Aorta (tissue), 5 donors: ENCODE measurements at regions of chr1 and their contacts with region 1.

Region 1: DNA sequence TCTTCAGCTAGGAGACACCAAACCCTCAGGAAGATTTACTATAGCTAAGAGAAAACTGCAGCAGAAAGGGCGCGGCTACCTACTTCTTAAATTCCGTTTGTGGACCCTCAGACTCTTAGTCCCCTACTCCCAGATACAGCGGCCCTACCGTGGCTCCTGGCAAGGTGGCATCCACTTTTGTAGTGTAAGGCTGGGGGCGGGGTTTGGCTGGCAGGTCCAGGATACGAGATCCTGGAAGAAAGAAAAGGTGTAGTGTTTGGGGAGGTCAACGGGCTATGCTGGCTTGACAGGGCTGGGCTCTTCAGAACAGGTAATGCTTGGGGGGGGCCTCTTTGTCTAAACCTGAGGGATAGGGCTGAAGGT is 280 bp downstream of the CREB3L4 start:
- DNase-seq: peak in 1 of 2 donors; percentile 62
- ATAC-seq: no peak
- H3K4me3 ChIP-seq: peak overlapping the region; percentile 46 to 68
- H3K27ac ChIP-seq: peak overlapping the region in 1 of 2 donors; percentile 61
- H3K4me1 ChIP-seq: no peaks in the 10 kb centered on the region
- H3K27me3 ChIP-seq: no peaks in the 10 kb centered on the region

Region 2: DNA sequence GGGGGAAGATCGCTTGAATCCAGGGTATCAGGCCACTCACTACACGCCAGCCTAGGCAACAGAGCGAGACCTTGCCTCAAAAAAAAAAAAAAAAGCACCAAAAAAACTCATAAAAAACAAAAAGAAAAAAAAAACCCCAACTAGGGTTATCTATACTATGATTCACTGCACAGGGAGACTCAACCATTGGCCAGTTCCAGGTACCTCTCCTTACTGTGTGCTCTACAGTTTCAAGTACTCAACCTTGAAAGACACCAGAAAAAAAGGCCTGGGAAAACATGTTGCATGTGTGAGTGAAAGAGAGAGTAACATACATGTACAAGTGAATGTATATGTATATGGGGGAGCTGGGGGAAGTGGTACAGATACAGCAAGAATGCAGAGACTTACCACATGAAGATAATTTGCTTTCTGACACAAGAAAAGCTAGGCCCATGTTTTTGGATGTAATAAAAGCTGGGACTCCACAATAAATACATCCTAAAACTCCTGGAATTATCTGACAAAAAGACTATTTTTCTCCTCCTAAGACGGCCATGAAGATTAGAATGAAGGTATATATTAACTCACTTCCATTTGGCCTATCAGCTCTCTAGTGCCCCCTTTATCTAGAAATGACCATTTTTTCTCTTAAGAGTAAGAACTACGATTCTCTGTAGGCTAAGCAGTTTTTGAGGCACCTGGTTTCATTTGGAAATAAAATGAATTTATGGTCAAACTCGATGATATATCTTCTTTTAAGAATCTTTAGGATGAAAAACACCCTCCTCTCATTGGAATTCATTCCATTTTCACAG is 140.6 kb before region 1 on chr1:
- intact Hi-C with region 1: loop called in 1 of 2 experiments (anchors 1 kb)
- DNase-seq: no peak
- ATAC-seq: no peak
- H3K4me3 ChIP-seq: no peak overlapping the region
- H3K27ac ChIP-seq: no peak overlapping the region
- H3K4me1 ChIP-seq: peaks cover 0 to 3% of the 10 kb centered on the region in 2 donors
- H3K27me3 ChIP-seq: no peaks in the 10 kb centered on the region

Region 3: DNA sequence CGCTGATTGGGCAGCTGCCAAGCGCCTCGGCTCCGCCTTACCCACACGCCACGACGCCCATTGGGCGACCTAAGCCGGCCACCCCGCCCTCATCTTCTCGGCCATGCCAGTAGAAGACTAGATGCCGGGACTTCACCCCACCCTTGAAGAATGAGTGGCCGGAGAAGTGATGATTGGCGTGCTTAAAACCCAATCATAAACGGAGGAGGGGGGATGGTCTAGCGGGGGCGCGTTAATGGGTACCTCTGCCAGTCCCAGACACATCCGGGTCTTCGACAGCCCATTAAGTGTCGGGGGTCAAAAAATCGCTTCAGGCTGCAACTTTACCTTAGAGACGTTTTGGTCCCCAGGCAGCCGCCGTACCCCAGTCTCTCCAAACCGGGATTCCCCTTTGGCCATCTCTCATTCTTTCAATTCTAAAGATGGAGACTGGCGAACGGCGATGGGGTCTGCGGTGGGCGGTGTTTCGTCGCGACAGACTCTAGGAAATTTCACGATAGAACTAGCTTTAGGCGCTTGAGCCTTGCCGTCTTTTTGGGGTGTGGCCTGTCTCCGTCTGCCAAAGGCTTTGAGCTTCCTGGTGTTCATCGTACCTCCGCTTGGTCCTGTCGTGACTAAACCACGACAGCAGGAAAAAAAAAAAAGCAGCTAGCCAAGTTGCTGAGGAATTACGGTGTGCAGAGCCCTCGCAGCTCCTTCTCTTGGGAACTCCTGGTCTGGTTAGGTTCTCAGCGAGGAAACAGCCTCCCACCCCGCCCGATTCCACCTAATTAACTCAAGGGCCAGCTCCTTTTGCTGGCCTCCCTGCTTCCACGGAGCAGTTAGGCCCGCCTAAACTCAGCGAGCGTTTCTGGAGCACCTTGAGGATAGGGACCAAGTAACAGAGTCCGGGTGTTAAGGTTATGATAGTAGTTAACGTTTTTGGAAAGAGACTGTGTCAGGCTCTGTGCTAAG is 44.7 kb before region 1 on chr1 and contains the start of gene GATAD2B:
- intact Hi-C with region 1: no loop called
- DNase-seq: peak; percentile 100
- ATAC-seq: peak; percentile 98
- H3K4me3 ChIP-seq: peak within 1 kb of the TSS; percentile 82 to 91
- H3K27ac ChIP-seq: peak within 1 kb of the TSS; percentile 72 to 77
- H3K4me1 ChIP-seq: peaks cover 0 to 4% of the 10 kb centered on the region in 2 donors
- H3K27me3 ChIP-seq: no peaks in the 10 kb centered on the region
- total RNA-seq, gene GATAD2B: 52.3 to 67.8 TPM

Region 4: DNA sequence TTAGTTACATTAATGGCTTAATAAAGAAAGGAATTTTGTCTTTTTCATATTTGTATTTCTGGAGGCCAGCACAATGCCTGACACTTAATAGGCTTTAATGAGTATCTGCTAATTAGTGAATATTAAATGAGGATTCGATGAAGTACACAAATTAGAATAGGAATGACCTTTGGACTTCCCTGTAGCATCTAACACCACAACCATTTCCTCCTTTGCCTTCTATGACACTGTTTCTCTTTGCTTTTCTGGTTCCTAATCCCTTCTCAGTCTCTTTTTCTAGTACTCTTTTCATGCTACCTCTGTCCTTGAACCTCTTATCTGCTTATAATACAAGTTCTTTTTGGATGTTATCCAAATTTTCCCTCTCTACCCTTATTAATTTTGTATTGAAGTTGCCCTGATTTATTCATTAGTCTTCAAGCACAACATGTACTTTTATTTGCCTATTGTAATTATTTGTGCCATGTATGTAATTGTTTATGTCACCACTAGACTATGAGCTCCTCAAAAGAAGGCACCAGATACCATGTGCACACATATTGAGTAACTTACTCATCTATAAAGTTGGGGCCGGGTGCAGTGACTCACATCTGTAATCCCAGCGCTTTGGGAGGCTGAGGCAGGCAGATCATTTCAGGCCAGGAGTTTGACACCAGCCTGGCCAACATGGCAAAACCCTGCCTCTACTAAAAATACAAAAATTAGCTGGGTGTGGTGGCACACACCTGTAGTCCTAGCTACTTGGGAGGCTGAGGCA is 46.4 kb after region 1 on chr1:
- intact Hi-C with region 1: no loop called
- DNase-seq: no peak
- ATAC-seq: no peak
- H3K4me3 ChIP-seq: no peak overlapping the region
- H3K27ac ChIP-seq: no peak overlapping the region
- H3K4me1 ChIP-seq: no peaks in the 10 kb centered on the region
- H3K27me3 ChIP-seq: no peaks in the 10 kb centered on the region

Region 5: GRCh38 chr1:154115180-154115579 is 147.2 kb after region 1 on chr1:
- intact Hi-C with region 1: no loop called
- DNase-seq: no peak
- ATAC-seq: no peak
- H3K4me3 ChIP-seq: no peak overlapping the region
- H3K27ac ChIP-seq: no peak overlapping the region
- H3K4me1 ChIP-seq: no peaks in the 10 kb centered on the region
- H3K27me3 ChIP-seq: no peaks in the 10 kb centered on the region